ENCODE measurements at regions of chr2 and their contacts with region 1.

Region 1: DNA sequence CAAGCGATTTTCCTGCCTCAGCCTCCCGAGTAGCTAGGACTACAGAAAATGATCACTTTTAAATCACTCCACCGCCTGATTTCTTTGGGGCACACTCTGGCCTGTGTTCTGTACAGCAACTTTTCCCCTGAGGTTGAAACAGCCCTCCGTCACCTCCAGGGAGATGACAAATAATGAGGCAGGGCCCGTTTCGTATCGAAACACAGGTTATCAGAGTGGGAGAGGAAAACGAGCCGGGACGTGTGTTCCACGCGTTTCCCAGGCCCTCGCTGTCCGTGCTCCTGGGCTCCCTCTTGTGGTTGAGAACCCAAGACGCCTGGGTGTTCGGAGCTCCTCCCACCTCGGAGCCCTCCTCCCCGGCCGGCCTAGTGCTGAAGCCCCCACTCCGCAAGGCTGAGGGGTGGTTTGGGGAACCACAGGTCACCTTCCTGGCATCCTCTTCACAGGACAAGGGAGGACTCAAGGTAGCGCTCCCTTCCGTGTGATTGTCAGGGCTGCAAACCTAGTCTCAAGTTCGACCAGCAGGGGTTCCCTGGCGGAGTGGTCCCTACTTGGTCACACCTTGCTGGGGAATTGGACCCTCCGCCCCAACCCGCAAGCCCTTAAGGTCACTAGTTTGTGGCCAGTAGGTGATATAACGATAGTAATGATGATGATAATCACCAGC is 12.8 kb downstream of the ATP6V1B1 start:
- DNase-seq: peak; percentile 93
- H3K4me3 Mint-ChIP-seq: peak overlapping the region; percentile 83
- H3K27ac Mint-ChIP-seq: peak overlapping the region; percentile 58
- H3K4me1 Mint-ChIP-seq: peaks cover 16% of the 10 kb centered on the region
- H3K27me3 Mint-ChIP-seq: peaks cover 23% of the 10 kb centered on the region

Region 2: DNA sequence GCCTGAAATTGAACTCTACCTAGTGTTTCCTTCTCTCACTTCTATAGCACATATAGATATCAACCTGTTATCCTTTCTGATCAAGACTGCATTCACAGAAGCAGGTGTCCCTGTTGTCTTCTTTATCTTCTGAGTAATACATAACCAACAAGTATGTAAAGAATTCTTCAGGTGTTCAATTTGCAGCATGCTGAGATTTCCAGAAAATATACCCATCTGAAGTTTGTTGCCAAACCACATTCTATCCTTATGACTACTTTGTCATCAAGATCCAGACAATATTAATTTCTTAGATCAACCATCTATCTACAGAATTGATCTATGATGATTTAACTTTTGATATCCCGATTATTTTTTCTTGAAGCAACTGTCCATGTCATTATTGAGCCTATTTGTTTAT is 464.4 kb before region 1 on chr2:
- intact Hi-C with region 1: no loop called
- DNase-seq: no peak
- H3K4me3 Mint-ChIP-seq: no peak overlapping the region
- H3K27ac Mint-ChIP-seq: no peak overlapping the region
- H3K4me1 Mint-ChIP-seq: no peaks in the 10 kb centered on the region
- H3K27me3 Mint-ChIP-seq: peaks cover 21% of the 10 kb centered on the region

Region 3: GRCh38 chr2:70656421-70657010 is 292.0 kb before region 1 on chr2:
- intact Hi-C with region 1: loop called (anchors 5 kb)
- DNase-seq: no peak
- H3K4me3 Mint-ChIP-seq: no peak overlapping the region
- H3K27ac Mint-ChIP-seq: no peak overlapping the region
- H3K4me1 Mint-ChIP-seq: peaks cover 9% of the 10 kb centered on the region
- H3K27me3 Mint-ChIP-seq: peaks cover 27% of the 10 kb centered on the region

Region 4: GRCh38 chr2:70871398-70872211 is 76.9 kb before region 1 on chr2:
- intact Hi-C with region 1: loop called (anchors 1 kb)
- DNase-seq: peak; percentile 94
- H3K4me3 Mint-ChIP-seq: peak overlapping the region; percentile 49
- H3K27ac Mint-ChIP-seq: no peak overlapping the region
- H3K4me1 Mint-ChIP-seq: peaks cover 6% of the 10 kb centered on the region
- H3K27me3 Mint-ChIP-seq: peaks cover 28% of the 10 kb centered on the region